Transverse colon (tissue), 4 donors: ENCODE measurements at regions of chr9 and their contacts with region 1.

Region 1: DNA sequence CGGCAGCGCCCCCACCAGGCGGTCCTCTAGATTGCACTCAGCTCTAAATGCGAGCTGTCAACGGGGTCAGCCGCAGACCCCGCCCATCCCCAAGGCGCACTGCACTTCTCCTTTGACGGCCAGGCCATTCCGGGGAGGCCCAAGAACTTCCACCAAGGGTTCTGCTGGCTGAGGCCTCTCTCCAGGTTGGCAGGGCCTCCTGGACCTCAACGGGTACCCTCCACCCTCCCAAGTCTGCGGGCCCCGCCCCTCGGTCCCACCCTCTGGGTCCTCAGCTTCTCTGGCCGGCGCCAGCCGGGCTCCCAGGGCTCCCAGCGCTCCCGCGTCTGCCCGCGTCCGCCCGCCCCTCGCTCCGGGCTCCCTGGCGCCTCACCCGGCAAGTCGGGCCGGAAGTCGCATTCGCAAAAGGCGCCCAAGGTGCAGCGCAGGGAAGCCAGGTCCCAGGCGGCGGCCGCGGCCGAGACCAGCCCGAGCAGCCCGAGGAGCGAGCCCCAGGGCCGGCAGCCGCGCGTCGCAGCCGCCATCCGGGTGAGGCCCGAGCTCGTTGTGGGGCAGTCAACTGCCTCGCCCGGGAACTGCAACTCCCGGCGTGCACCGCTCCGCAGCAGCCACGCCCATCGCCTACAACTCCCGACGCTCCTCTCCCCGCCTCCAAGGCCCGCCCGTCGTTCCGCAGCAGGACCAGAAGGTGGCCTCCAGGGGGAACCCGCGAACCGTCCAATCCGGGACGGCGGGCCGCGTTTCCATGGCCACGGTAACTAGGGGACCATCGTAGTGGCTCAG is at the start of gene TOR2A:
- DNase-seq: peak; percentile 99
- H3K4me3 ChIP-seq: peak within 1 kb of the TSS; percentile 71 to 97 (median 80)
- H3K27ac ChIP-seq: peak within 1 kb of the TSS; percentile 98 to 100 (median 98)
- H3K4me1 ChIP-seq: peaks cover 6 to 22% (median 12%) of the 10 kb centered on the region in 4 donors
- H3K27me3 ChIP-seq: no peaks in the 10 kb centered on the region
- CTCF ChIP-seq: peak; percentile 87 to 98 (median 95)
- EP300 ChIP-seq: no peak
- POLR2A ChIP-seq: peak; percentile 89
- total RNA-seq, gene TOR2A: 31.4 to 126 (median 48.1) TPM

Region 2: DNA sequence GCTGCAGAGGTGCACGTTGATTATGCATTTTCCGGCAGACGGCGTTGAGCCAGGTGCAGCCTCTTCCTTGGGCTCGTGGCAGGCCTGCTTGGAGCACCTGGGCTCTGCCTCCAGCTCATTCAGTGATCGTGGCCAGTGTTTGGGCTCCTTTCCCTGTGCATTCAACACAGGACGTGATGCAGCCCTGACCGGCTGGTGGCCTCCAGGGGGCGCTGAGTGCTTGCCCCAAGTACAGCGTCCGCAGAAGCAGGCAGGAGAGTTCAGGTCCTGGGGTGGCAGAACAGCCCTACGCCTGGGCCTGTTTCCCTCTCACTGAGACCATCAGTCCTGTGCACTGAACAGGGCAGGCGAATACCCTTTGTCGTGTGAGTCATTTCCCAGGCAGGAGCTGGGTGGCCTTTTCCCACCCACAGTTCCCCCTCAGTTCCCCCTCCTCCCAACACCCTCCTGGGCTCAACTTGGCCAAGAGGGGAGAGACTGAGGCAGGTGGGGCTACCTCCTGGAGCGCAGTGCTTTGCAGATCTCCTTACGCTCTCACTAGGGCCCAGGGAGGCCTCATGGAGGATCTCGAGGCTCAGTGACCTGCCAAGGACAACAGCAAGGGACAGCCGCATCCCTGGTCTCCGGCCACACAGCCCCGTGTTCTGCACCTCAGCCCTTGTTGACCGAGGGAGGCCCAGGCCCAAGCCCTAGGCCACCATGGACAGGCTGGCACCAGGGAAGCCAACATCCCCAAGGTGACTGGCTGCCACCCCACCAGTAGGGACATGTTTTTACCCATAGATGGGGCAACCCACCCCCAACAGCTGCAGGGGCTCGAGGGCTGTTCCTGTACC is 230.8 kb before region 1 on chr9:
- in situ Hi-C with region 1: loop called in 1 of 4 experiments (anchors 25 kb)
- intact Hi-C with region 1: loop called (anchors 10 kb)
- DNase-seq: peak; percentile 87
- H3K4me3 ChIP-seq: no peak overlapping the region
- H3K27ac ChIP-seq: peak overlapping the region in 3 of 4 donors; percentile 1 to 32 (median 23)
- H3K4me1 ChIP-seq: peaks cover 0 to 2% (median 0%) of the 10 kb centered on the region in 4 donors
- H3K27me3 ChIP-seq: no peaks in the 10 kb centered on the region
- CTCF ChIP-seq: peak; percentile 76 to 92 (median 87)
- EP300 ChIP-seq: no peak
- POLR2A ChIP-seq: no peak

Region 3: GRCh38 chr9:127586537-127586936 is 148.4 kb before region 1 on chr9:
- in situ Hi-C with region 1: loop called (anchors 10 to 25 kb)
- intact Hi-C with region 1: loop called (anchors 5 kb)
- DNase-seq: peak; percentile 85
- H3K4me3 ChIP-seq: no peak overlapping the region
- H3K27ac ChIP-seq: no peak overlapping the region
- H3K4me1 ChIP-seq: peaks cover 0 to 29% (median 15%) of the 10 kb centered on the region in 4 donors
- H3K27me3 ChIP-seq: no peaks in the 10 kb centered on the region
- CTCF ChIP-seq: peak; percentile 83 to 97 (median 88)
- EP300 ChIP-seq: no peak
- POLR2A ChIP-seq: no peak

Region 4: GRCh38 chr9:127785023-127785932 is 50.3 kb after region 1 on chr9:
- in situ Hi-C with region 1: loop called in 2 of 4 experiments (anchors 5 kb)
- intact Hi-C with region 1: loop called (anchors 2 kb)
- DNase-seq: peak; percentile 91
- H3K4me3 ChIP-seq: peak overlapping the region; percentile 50 to 100 (median 98)
- H3K27ac ChIP-seq: peak overlapping the region; percentile 96 to 99 (median 96)
- H3K4me1 ChIP-seq: peaks cover 10 to 34% (median 14%) of the 10 kb centered on the region in 4 donors
- H3K27me3 ChIP-seq: no peaks in the 10 kb centered on the region
- CTCF ChIP-seq: peak; percentile 93 to 98 (median 97)
- EP300 ChIP-seq: no peak
- POLR2A ChIP-seq: no peak

Region 5: GRCh38 chr9:127869310-127870152 is 134.6 kb after region 1 on chr9:
- in situ Hi-C with region 1: loop called in 1 of 4 experiments (anchors 10 kb)
- intact Hi-C with region 1: no loop called
- DNase-seq: peak; percentile 92
- H3K4me3 ChIP-seq: no peak overlapping the region
- H3K27ac ChIP-seq: no peak overlapping the region
- H3K4me1 ChIP-seq: peaks cover 5 to 11% (median 9%) of the 10 kb centered on the region in 4 donors
- H3K27me3 ChIP-seq: no peaks in the 10 kb centered on the region
- CTCF ChIP-seq: peak; percentile 80 to 97 (median 88)
- EP300 ChIP-seq: no peak
- POLR2A ChIP-seq: no peak

Region 6: DNA sequence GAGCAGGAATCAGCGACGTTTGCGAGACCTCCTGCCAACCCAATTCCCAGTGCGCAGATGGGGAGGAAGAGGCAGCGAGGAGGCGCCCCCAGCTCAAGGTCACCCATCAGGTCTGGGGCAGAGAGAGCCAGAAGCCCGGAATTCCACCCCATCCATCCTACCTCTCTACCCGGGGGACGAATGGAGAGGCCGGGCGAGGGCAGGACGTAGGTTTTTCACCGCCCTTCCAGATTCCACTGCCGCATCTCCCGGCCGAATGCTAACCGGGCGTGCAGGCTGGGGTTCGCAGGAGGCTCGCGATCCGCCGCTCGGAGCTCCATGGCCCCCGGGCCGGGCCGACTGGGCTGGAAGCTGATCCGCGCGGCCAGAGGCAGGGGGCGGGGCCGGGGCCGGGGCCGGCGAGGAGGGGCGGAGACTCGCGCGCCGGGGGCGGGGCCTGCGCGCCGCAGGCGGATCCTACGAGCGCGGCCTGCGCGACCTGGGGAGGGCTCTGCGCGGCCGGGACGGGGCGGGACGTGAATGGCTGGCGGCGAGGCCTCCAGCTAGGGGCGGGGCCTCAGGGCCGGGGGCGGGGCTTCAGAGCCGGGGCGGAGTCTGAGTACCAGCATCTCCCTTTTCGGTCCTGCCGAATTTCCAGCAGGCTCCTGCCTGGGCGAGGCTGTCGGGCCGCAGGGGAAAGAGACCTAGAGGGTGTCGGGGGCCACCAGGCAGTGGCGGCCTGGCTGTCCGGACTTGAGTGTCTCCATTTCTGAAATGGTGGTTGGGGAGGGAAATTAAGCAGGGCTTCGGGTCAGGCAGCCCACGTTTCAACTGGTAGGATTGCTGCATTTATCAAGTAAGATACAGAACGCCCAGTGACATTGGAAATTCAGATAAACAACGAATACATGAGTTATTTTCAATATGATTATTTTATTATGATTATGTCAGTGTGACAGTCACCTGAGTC is 182.0 kb after region 1 on chr9 and contains the start of gene ST6GALNAC4:
- in situ Hi-C with region 1: no loop called
- intact Hi-C with region 1: loop called (anchors 5 kb)
- DNase-seq: peak; percentile 96
- H3K4me3 ChIP-seq: peak within 1 kb of the TSS; percentile 42 to 54 (median 53)
- H3K27ac ChIP-seq: peak within 1 kb of the TSS; percentile 58 to 84 (median 71)
- H3K4me1 ChIP-seq: peaks cover 27 to 72% (median 62%) of the 10 kb centered on the region in 4 donors
- H3K27me3 ChIP-seq: peaks cover 3% of the 10 kb centered on the region
- CTCF ChIP-seq: no peak
- EP300 ChIP-seq: no peak
- POLR2A ChIP-seq: peak; percentile 28
- total RNA-seq, gene ST6GALNAC4: 16.7 to 66.1 (median 47.3) TPM

Region 7: GRCh38 chr9:128007566-128008138 is 272.7 kb after region 1 on chr9:
- in situ Hi-C with region 1: no loop called
- intact Hi-C with region 1: no loop called
- DNase-seq: peak; percentile 73
- H3K4me3 ChIP-seq: no peak overlapping the region
- H3K27ac ChIP-seq: peak overlapping the region; percentile 45 to 68 (median 58)
- H3K4me1 ChIP-seq: peaks cover 0 to 18% (median 12%) of the 10 kb centered on the region in 4 donors
- H3K27me3 ChIP-seq: no peaks in the 10 kb centered on the region
- CTCF ChIP-seq: no peak
- EP300 ChIP-seq: no peak
- POLR2A ChIP-seq: no peak